Caco-2 (cell line): ENCODE measurements at regions of chr2 and their contacts with region 1.

Region 1: GRCh38 chr2:169386722-169387121 is 24.4 kb upstream of the LRP2 start:
- DNase-seq: no peak
- H3K4me3 ChIP-seq: no peak overlapping the region
- H3K4me3 Mint-ChIP-seq: no peak overlapping the region
- H3K27ac Mint-ChIP-seq: no peak overlapping the region
- H3K4me1 ChIP-seq: peaks cover 46% of the 10 kb centered on the region
- H3K4me1 Mint-ChIP-seq: peaks cover 25% of the 10 kb centered on the region
- H3K27me3 ChIP-seq: no peaks in the 10 kb centered on the region
- H3K27me3 Mint-ChIP-seq: no peaks in the 10 kb centered on the region
- CTCF ChIP-seq: no peak

Region 2: DNA sequence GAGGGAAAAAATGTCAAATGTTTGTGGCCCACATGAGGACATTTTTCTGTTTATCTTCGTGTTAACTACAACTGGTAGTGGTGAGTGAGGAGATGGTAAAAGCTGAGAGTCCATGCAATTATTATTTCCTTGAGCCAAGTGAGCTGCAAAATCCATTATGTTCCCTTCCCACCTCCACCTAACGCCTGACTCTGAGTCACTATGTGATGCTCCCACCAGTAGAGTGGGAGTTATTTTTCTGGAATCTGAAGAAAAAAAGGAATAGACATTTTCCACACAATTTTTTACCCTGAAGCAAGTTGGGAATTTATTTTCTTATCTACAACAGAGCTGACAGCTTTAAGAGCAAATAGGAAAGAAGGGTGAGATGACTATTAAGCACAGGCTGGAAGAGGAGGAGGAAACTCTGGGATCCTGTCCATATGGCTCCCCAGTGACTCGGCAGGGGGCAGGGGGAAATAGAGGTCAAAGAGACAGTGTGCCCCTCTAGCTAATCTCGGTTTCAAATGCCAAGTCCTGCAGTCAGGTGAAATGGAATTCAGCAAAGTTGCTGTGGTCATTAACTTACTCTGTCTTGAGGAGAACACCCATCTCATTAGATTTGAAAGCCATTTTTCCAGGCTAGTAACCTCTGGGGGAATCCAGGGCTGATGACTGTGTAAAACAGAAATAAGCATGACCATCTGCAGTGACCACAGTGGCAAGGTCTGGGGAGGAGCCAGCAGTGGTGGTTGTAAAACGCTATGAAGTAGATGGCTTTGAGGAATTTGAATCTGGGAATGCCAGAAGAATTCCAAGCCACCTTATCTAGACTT is 1603.3 kb before region 1 on chr2:
- CTCF ChIA-PET with region 1: no interaction called
- POLR2A ChIA-PET with region 1: interaction called, 12 read pairs
- intact Hi-C with region 1: no loop called
- DNase-seq: no peak
- H3K4me3 ChIP-seq: no peak overlapping the region
- H3K4me3 Mint-ChIP-seq: no peak overlapping the region
- H3K27ac Mint-ChIP-seq: no peak overlapping the region
- H3K4me1 ChIP-seq: peaks cover 8% of the 10 kb centered on the region; the same call in 1 of the 2 replicates
- H3K4me1 Mint-ChIP-seq: no peaks in the 10 kb centered on the region
- H3K27me3 ChIP-seq: no peaks in the 10 kb centered on the region
- H3K27me3 Mint-ChIP-seq: peaks cover 12% of the 10 kb centered on the region
- CTCF ChIP-seq: no peak

Region 3: DNA sequence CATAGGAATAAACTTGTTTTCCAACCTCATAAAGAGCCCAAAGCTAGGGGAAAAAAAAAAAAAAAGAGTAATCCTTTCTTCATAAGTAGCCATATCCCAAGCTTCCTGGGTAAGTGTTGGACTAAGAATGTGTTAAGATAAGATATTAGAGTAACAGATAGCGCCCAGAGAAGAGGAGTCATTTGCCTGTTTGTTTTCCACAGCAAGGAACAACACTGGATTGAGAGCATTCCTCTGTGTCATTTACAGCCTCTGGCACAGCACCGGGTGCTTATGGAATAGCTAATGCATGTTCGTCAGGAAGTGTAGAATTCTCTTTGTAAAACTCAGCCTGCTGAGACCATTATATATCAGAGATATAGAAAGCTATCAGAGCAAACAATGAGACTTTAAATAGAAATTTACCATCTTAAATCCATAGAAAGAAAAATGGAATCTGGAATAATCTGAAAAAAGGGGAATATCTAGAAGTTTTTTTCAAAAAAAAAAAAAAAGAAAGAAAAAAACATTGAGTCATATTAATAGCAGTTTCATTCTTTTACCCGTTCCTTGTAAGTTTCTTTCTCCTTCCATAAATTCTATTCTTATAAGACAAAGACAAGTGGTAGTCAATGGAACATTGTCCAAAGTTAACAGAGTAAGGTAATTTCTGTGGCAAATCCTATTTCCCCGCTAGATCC is 62.0 kb before region 1 on chr2:
- CTCF ChIA-PET with region 1: no interaction called
- POLR2A ChIA-PET with region 1: no interaction called
- intact Hi-C with region 1: loop called (anchors 1 kb)
- DNase-seq: peak; percentile 66 to 81
- H3K4me3 ChIP-seq: no peak overlapping the region
- H3K4me3 Mint-ChIP-seq: peak overlapping the region; percentile 39
- H3K27ac Mint-ChIP-seq: peak overlapping the region; percentile 68
- H3K4me1 ChIP-seq: peaks cover 36% of the 10 kb centered on the region
- H3K4me1 Mint-ChIP-seq: peaks cover 26% of the 10 kb centered on the region
- H3K27me3 ChIP-seq: no peaks in the 10 kb centered on the region
- H3K27me3 Mint-ChIP-seq: no peaks in the 10 kb centered on the region
- CTCF ChIP-seq: no peak

Region 4: GRCh38 chr2:169336695-169337094 is 50.0 kb before region 1 on chr2:
- CTCF ChIA-PET with region 1: no interaction called
- POLR2A ChIA-PET with region 1: no interaction called
- intact Hi-C with region 1: no loop called
- DNase-seq: no peak
- H3K4me3 ChIP-seq: no peak overlapping the region
- H3K4me3 Mint-ChIP-seq: no peak overlapping the region
- H3K27ac Mint-ChIP-seq: peak overlapping the region; percentile 19
- H3K4me1 ChIP-seq: peaks cover 37% of the 10 kb centered on the region
- H3K4me1 Mint-ChIP-seq: peaks cover 11% of the 10 kb centered on the region
- H3K27me3 ChIP-seq: no peaks in the 10 kb centered on the region
- H3K27me3 Mint-ChIP-seq: no peaks in the 10 kb centered on the region
- CTCF ChIP-seq: no peak

Region 5: GRCh38 chr2:169438460-169439072 is 51.8 kb after region 1 on chr2:
- CTCF ChIA-PET with region 1: no interaction called
- POLR2A ChIA-PET with region 1: no interaction called
- intact Hi-C with region 1: no loop called
- DNase-seq: no peak
- H3K4me3 ChIP-seq: no peak overlapping the region
- H3K4me3 Mint-ChIP-seq: no peak overlapping the region
- H3K27ac Mint-ChIP-seq: no peak overlapping the region
- H3K4me1 ChIP-seq: no peaks in the 10 kb centered on the region
- H3K4me1 Mint-ChIP-seq: no peaks in the 10 kb centered on the region
- H3K27me3 ChIP-seq: no peaks in the 10 kb centered on the region
- H3K27me3 Mint-ChIP-seq: peaks cover 19% of the 10 kb centered on the region
- CTCF ChIP-seq: no peak